GM10248 (cell line): ENCODE measurements at regions of chr2 and their contacts with region 1.

Region 1: DNA sequence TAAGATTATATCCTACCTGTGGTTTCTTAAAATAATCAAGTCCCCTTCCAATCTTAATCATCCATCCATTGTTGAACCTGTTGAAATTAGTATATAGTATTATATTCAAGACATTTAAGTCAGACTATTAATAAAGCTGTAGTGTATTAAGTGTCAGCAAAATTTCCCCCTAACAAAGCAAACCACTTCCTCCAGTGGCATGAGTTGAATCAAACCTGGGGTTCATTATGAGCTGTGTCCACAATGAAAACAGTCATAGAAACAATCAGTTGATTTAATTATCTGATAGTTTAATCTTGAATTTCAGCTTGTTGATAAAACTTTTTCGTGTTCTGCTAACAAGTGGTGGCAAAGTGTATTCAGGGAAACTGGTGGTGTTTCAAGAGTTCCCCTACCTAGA is 11.3 kb downstream of the MITD1 start:
- DNase-seq: no peak
- CTCF ChIP-seq: no peak

Region 2: GRCh38 chr2:99154643-99155536 is 14.6 kb before region 1 on chr2 and contains the starts of genes LIPT1 and TSGA10:
- CTCF ChIA-PET with region 1: interaction called, 26 read pairs
- POLR2A ChIA-PET with region 1: no interaction called
- DNase-seq: peak; percentile 95
- CTCF ChIP-seq: no peak

Region 3: DNA sequence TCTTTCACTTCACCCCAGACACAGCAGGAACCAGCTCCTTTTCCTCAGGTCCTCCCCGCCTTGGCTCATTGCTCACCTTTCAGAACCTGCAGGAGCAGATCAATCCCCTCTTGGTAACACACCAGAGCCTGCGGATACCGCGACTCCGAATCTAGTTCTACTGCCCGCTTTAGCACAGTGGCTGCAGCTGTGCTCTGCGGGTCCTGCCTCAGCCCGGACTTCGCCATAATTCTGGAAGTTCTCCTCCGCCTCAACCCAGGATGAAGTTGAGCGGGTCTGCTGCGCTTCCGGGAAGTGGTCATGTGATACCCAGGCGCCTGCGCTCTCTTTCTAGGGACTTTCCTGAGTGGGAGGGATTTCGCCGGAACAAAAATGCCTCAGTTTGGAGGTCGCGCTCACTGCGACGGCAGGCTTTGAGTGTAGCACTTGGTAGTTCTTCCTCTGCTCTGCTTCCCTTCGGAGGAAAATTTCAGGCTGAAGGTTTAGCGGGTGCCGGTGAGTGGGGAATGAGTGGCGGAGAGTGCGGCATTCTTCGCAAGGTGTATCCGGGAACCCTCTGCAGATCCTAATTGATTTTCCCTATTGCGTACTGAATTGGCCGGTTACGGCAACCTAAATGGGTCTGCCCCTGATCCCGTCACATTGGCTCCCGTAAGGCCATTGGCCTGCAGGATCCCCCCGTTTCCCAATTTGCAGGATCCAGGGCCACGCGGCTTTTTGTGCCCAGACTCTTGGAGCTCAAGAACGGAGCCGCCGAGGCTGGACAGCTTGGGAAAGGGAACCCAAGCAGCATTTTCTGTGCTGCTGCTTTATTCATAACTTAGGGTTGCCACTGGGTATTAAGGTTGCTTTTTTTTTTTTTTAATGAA is 11.5 kb after region 1 on chr2 and contains the starts of genes MITD1 and MRPL30:
- CTCF ChIA-PET with region 1: interaction called, 15 read pairs
- POLR2A ChIA-PET with region 1: no interaction called
- DNase-seq: peak; percentile 89
- CTCF ChIP-seq: no peak